ENCODE measurements at regions of chr16 and their contacts with region 1.

Region 1: DNA sequence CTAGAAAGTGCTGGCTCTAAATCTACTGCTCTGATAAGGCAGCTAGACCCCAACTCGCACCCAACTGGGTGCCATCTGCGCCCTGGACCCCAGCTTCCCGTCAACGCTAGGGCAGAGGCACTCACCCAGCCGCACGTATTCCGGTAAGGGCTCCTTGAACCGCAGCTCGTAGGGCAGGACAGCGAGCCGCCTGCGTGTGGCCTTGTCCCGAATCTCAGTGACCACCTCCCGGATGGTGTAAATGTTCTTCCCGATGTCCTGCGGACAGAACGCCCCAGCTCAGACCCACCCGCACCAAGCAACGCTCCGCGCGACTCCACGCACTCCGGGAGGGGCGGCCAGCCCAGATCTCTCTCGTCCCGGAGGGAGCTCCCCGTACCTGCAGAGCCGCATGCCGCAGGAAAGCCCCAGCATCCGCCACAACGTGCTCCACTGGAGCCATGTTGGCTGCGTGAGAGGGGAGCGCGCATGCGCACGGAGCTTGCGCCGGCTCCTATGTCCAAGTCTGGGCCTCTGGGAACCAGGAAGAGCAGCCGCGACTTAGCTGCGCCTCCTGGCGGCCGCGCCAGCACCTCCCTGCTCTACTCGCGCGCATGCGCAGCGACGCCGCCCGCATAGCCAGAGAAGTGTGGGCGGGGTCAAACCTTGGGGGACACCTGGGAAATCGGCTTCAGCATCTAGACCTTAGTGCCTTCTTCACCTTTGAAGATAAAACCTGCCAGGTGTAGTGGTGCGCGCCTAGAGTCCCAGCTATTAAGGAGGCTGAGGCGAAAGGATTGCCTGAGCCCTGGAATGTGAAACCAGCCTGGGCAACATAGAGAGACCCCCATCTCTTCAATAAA is at the start of gene NOB1:
- DNase-seq: peak; percentile 97
- ATAC-seq: peak; percentile 99
- H3K4me3 Mint-ChIP-seq: peak within 1 kb of the TSS; percentile 100
- H3K27ac Mint-ChIP-seq: peak within 1 kb of the TSS; percentile 100
- H3K4me1 Mint-ChIP-seq: peaks cover 22% of the 10 kb centered on the region
- H3K27me3 Mint-ChIP-seq: no peaks in the 10 kb centered on the region
- CTCF ChIP-seq: peak; percentile 90
- total RNA-seq, gene NOB1: 139 to 146 TPM

Region 2: DNA sequence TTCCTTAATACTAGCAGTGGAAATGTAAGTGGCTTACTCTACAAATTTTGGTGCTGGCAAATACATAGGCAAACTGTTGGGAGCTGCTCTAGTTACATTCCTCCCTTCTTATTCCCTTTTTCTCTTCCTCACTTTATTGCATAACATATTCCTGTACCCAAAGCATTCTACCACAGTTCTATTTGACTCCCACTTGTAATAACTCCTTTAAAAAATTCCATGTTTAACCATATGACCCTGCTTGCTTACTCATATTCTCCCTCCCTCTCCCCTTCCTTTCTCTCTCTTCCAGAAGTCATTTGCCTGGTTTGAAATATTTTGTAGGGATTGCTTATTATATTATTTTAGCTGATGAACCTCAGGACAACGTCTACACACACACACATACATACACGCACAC is 51.1 kb before region 1 on chr16:
- CTCF ChIA-PET with region 1: interaction called, 47 read pairs
- POLR2A ChIA-PET with region 1: interaction called, 21 read pairs
- intact Hi-C with region 1: loop called (anchors 2 kb)
- DNase-seq: no peak
- ATAC-seq: no peak
- H3K4me3 Mint-ChIP-seq: no peak overlapping the region
- H3K27ac Mint-ChIP-seq: peak overlapping the region; percentile 12
- H3K4me1 Mint-ChIP-seq: peaks cover 2% of the 10 kb centered on the region
- H3K27me3 Mint-ChIP-seq: no peaks in the 10 kb centered on the region
- CTCF ChIP-seq: no peak

Region 3: DNA sequence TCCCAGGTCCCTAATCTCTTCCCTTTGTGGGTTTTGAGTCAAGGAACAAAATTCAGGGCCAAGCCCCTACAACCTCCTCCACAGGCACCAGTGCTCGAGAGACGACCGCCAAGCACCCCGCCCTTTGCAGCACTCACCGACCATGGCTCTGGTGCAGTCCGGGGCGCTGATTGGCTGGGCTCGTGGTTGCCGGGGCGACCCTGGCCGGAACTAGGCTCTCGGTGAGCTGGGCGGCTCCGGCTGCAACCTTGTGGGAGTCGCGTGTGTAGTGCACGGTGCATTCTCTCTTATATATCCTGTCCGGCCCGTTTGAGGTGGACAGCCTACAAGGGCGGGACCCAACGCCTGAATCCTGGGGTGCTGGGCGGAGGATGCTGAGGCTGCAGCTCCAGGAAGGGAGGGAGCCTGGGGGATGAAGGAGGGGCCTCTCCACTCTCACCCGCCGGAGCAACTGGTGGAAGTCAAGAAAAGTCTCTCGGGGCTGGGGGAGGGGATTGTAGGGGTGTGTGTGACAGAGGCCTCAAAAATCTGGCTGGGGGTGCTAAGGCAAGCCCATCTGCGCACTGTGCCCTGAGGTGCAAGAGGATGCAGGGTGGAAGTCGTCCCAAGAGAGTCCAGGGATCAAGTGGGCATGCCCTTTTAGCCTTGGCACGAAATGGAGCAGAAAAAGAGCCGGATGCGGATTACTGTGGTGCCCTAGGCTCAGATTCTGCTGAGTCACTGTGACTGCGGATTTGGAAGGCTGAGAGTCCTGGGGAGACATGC is 28.2 kb before region 1 on chr16 and contains the start of gene NQO1:
- CTCF ChIA-PET with region 1: interaction called, 31 read pairs
- POLR2A ChIA-PET with region 1: interaction called, 13 read pairs
- intact Hi-C with region 1: no loop called
- DNase-seq: peak; percentile 96
- ATAC-seq: peak; percentile 99
- H3K4me3 Mint-ChIP-seq: peak within 1 kb of the TSS; percentile 98
- H3K27ac Mint-ChIP-seq: peak within 1 kb of the TSS; percentile 97
- H3K4me1 Mint-ChIP-seq: peaks cover 22% of the 10 kb centered on the region
- H3K27me3 Mint-ChIP-seq: no peaks in the 10 kb centered on the region
- CTCF ChIP-seq: no peak
- total RNA-seq, gene NQO1: 7.6 to 8.1 TPM

Region 4: DNA sequence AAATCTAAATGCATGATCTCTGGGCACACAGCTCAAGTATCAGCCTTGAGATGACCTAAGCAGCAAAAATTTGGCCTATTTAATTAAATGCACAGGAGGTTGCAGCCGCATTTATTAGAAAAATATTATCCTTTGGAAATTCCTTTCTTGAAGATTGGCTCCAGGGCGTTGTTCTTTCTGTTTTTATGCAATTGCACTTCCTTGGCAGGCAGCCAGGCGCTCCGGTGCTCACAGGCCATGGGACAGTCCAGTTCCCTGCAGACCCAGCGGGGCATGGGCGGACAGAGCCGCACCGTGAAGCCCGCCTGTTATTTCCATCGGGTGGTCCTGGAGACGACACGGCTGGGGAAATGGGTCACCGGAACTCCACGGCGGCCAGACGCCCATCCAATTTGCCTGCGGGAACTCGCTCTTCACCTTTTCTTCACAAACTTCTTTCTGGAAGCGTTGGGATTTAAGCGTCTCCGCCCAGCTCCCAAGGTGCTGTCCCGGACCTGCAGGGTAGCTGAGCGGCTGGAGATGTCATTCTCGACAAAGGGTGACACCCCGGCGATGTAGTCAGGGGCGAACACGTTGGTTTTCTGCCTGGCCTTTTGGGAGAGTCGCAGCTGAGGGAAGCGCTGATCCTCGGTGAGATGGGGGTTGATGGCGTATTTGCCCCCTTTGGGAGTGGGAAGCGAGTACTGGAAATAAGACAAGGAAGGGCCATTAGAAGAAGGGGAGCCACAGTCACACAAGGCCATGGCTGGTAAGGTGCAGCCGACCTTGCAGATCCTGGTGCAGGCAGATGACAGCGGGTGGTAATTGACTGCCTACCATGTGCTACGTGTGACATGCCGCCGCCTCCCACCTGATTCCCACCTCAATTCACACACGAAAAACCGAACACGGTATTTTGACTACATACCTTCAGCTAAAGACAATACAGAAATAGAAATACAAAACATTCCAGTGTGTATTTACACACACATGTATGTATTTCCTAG is 12.5 kb before region 1 on chr16:
- CTCF ChIA-PET with region 1: interaction called, 15 read pairs
- POLR2A ChIA-PET with region 1: interaction called, 12 read pairs
- intact Hi-C with region 1: no loop called
- DNase-seq: no peak
- ATAC-seq: no peak
- H3K4me3 Mint-ChIP-seq: no peak overlapping the region
- H3K27ac Mint-ChIP-seq: no peak overlapping the region
- H3K4me1 Mint-ChIP-seq: no peaks in the 10 kb centered on the region
- H3K27me3 Mint-ChIP-seq: no peaks in the 10 kb centered on the region
- CTCF ChIP-seq: no peak

Region 5: DNA sequence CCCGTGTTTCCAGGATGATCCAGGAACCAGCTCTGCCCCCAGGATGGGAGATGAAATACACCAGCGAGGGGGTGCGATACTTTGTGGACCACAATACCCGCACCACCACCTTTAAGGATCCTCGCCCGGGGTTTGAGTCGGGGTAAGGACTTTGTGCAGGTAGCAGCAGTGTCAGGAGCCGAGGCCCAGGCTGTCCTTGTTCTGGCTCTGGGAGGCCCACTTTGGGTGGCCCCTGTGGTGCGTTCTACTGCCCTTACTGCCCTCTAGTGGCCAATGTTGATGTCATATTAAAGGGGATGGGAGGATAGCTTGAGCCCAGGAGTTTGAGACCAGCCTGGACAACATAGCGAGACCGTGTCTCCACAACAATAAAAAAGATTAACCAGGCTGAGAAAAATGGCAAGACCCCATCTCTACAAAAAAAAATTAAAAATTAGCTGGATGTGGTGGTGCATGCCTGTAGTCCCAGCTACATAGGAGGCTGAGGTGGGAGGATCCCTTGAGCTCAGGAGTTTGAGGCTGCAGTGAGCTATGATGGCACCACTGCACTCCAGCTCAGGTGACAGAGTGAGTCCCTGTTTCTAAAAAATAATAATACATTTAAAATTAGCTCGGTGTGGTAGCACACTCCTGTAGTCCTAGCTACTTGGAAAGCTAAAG is 175.6 kb after region 1 on chr16:
- CTCF ChIA-PET with region 1: interaction called, 11 read pairs
- POLR2A ChIA-PET with region 1: interaction called, 3 read pairs
- intact Hi-C with region 1: no loop called
- DNase-seq: peak; percentile 66
- ATAC-seq: peak; percentile 88
- H3K4me3 Mint-ChIP-seq: no peak overlapping the region
- H3K27ac Mint-ChIP-seq: no peak overlapping the region
- H3K4me1 Mint-ChIP-seq: no peaks in the 10 kb centered on the region
- H3K27me3 Mint-ChIP-seq: no peaks in the 10 kb centered on the region
- CTCF ChIP-seq: peak; percentile 78

Measured in activated CD8-positive, alpha-beta T cell treated with anti-CD3 and anti-CD28 coated beads for 36 hours (primary cell).